Naive thymus-derived CD4-positive, alpha-beta T cell (primary cell): ENCODE measurements at regions of chr20 and their contacts with region 1.

Region 1: GRCh38 chr20:1266167-1266973 is at the start of gene SNPH:
- DNase-seq: peak; percentile 41 to 79 (median 67)
- ATAC-seq: peak; percentile 93
- H3K4me3 ChIP-seq: peak within 1 kb of the TSS; percentile 66
- H3K4me3 Mint-ChIP-seq: peak within 1 kb of the TSS; percentile 79 to 99 (median 93)
- H3K27ac ChIP-seq: peak within 1 kb of the TSS; percentile 88
- H3K27ac Mint-ChIP-seq: peak within 1 kb of the TSS; percentile 77 to 100 (median 98)
- H3K4me1 ChIP-seq: peaks cover 9 to 54% of the 10 kb centered on the region in 2 donors
- H3K4me1 Mint-ChIP-seq: peaks cover 22 to 87% (median 81%) of the 10 kb centered on the region in 7 donors
- H3K27me3 ChIP-seq: no peaks in the 10 kb centered on the region
- H3K27me3 Mint-ChIP-seq: peaks cover 0 to 5% (median 0%) of the 10 kb centered on the region in 5 donors
- total RNA-seq, gene SNPH: 7.3 to 43.4 (median 22.5) TPM

Region 2: GRCh38 chr20:1020614-1021013 is 245.8 kb before region 1 on chr20:
- CTCF ChIA-PET with region 1: no interaction called
- POLR2A ChIA-PET with region 1: no interaction called
- intact Hi-C with region 1: no loop called
- DNase-seq: no peak
- ATAC-seq: no peak
- H3K4me3 ChIP-seq: no peak overlapping the region
- H3K4me3 Mint-ChIP-seq: no peak overlapping the region
- H3K27ac ChIP-seq: no peak overlapping the region
- H3K27ac Mint-ChIP-seq: no peak overlapping the region
- H3K4me1 ChIP-seq: no peaks in the 10 kb centered on the region
- H3K4me1 Mint-ChIP-seq: peaks cover 0 to under 1% (median 0%) of the 10 kb centered on the region in 7 donors
- H3K27me3 ChIP-seq: no peaks in the 10 kb centered on the region
- H3K27me3 Mint-ChIP-seq: peaks cover 3 to 24% (median 5%) of the 10 kb centered on the region in 5 donors

Region 3: DNA sequence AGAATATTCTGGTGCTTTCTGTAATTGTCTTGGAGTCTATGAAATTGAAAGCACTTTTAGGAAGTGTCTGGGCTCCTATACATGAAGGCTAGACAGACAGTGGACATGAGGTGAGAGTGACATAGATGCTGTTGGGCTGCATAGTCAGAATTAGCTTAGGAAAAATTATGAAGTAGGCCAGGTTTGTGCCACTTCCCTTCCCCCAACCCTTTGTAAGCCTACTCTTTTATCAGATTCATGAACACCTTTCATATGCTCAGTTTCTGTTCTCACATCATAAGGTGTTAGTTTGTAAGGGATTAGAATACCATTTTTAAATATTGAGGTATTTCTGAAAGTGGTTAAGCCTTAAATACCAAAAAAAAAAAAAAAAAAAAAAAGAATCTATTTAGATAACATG is 18.7 kb before region 1 on chr20:
- CTCF ChIA-PET with region 1: no interaction called
- POLR2A ChIA-PET with region 1: interaction called, 13 read pairs
- intact Hi-C with region 1: no loop called
- DNase-seq: no peak
- ATAC-seq: no peak
- H3K4me3 ChIP-seq: no peak overlapping the region
- H3K4me3 Mint-ChIP-seq: no peak overlapping the region
- H3K27ac ChIP-seq: no peak overlapping the region
- H3K27ac Mint-ChIP-seq: peak overlapping the region in 1 of 9 donors; percentile 21
- H3K4me1 ChIP-seq: no peaks in the 10 kb centered on the region
- H3K4me1 Mint-ChIP-seq: peaks cover 8 to 22% (median 15%) of the 10 kb centered on the region in 7 donors
- H3K27me3 ChIP-seq: peaks cover 0 to 2% of the 10 kb centered on the region in 2 donors
- H3K27me3 Mint-ChIP-seq: peaks cover 0 to 19% (median 8%) of the 10 kb centered on the region in 5 donors

Region 4: GRCh38 chr20:1281279-1282057 is 15.1 kb after region 1 on chr20:
- CTCF ChIA-PET with region 1: interaction called, 5 read pairs
- POLR2A ChIA-PET with region 1: interaction called, 74 read pairs
- intact Hi-C with region 1: loop called (anchors 1 to 2 kb)
- DNase-seq: peak in 1 of 9 donors; percentile 20
- ATAC-seq: no peak
- H3K4me3 ChIP-seq: no peak overlapping the region
- H3K4me3 Mint-ChIP-seq: peak overlapping the region in 9 of 10 donors; percentile 49 to 83 (median 67)
- H3K27ac ChIP-seq: peak overlapping the region; percentile 53
- H3K27ac Mint-ChIP-seq: peak overlapping the region in 8 of 9 donors; percentile 83 to 99 (median 89)
- H3K4me1 ChIP-seq: peaks cover 0 to 55% of the 10 kb centered on the region in 2 donors
- H3K4me1 Mint-ChIP-seq: peaks cover 13 to 75% (median 63%) of the 10 kb centered on the region in 7 donors
- H3K27me3 ChIP-seq: no peaks in the 10 kb centered on the region
- H3K27me3 Mint-ChIP-seq: no peaks in the 10 kb centered on the region

Region 5: GRCh38 chr20:1291191-1291741 is 24.9 kb after region 1 on chr20:
- CTCF ChIA-PET with region 1: interaction called, 6 read pairs
- POLR2A ChIA-PET with region 1: interaction called, 27 read pairs
- intact Hi-C with region 1: loop called (anchors 1 to 2 kb)
- DNase-seq: no peak
- ATAC-seq: no peak
- H3K4me3 ChIP-seq: no peak overlapping the region
- H3K4me3 Mint-ChIP-seq: no peak overlapping the region
- H3K27ac ChIP-seq: no peak overlapping the region
- H3K27ac Mint-ChIP-seq: peak overlapping the region in 7 of 9 donors; percentile 12 to 81 (median 69)
- H3K4me1 ChIP-seq: peaks cover 0 to 42% of the 10 kb centered on the region in 2 donors
- H3K4me1 Mint-ChIP-seq: peaks cover 22 to 70% (median 59%) of the 10 kb centered on the region in 7 donors
- H3K27me3 ChIP-seq: no peaks in the 10 kb centered on the region
- H3K27me3 Mint-ChIP-seq: no peaks in the 10 kb centered on the region

Region 6: GRCh38 chr20:1299522-1299921 is 33.2 kb after region 1 on chr20:
- CTCF ChIA-PET with region 1: interaction called, 3 read pairs
- POLR2A ChIA-PET with region 1: interaction called, 15 read pairs
- intact Hi-C with region 1: loop called in 1 of 2 experiments (anchors 1 kb)
- DNase-seq: peak in 6 of 9 donors; percentile 12 to 39 (median 32)
- ATAC-seq: peak; percentile 64
- H3K4me3 ChIP-seq: no peak overlapping the region
- H3K4me3 Mint-ChIP-seq: peak overlapping the region in 7 of 10 donors; percentile 40 to 62 (median 58)
- H3K27ac ChIP-seq: peak overlapping the region; percentile 17
- H3K27ac Mint-ChIP-seq: peak overlapping the region; percentile 52 to 93 (median 75)
- H3K4me1 ChIP-seq: peaks cover 12 to 23% of the 10 kb centered on the region in 2 donors
- H3K4me1 Mint-ChIP-seq: peaks cover 20 to 36% (median 32%) of the 10 kb centered on the region in 7 donors
- H3K27me3 ChIP-seq: no peaks in the 10 kb centered on the region
- H3K27me3 Mint-ChIP-seq: no peaks in the 10 kb centered on the region